GM10248 (cell line): ENCODE measurements at regions of chr5 and their contacts with region 1.

Region 1: DNA sequence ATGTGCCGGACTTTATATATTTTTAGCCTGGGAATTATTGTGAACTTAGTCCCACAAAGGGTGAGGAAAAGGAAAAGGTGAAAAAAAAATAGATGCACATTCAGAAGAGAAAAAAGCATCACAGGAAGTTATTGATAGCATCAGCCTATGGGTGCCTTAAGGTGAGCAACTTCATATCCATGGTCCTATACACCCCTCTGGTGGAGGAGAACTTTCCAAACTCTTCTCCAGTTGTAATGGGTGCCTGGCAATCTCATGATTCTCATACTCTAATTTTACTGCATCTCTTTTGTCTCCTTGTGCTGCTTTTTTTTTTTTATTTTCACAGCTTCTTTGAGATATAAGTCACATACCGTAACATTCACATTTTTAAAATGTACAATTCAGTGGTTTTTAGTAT is 107.4 kb downstream of the JAKMIP2 start:
- DNase-seq: no peak
- CTCF ChIP-seq: no peak

Region 2: GRCh38 chr5:147690595-147690994 is 15.4 kb after region 1 on chr5:
- CTCF ChIA-PET with region 1: interaction called, 10 read pairs
- POLR2A ChIA-PET with region 1: no interaction called
- DNase-seq: no peak
- CTCF ChIP-seq: no peak